Activated naive CD4-positive, alpha-beta T cell treated with anti-CD3 and anti-CD28 coated beads for 36 hours (primary cell): ENCODE measurements at regions of chr15 and their contacts with region 1.

Region 1: DNA sequence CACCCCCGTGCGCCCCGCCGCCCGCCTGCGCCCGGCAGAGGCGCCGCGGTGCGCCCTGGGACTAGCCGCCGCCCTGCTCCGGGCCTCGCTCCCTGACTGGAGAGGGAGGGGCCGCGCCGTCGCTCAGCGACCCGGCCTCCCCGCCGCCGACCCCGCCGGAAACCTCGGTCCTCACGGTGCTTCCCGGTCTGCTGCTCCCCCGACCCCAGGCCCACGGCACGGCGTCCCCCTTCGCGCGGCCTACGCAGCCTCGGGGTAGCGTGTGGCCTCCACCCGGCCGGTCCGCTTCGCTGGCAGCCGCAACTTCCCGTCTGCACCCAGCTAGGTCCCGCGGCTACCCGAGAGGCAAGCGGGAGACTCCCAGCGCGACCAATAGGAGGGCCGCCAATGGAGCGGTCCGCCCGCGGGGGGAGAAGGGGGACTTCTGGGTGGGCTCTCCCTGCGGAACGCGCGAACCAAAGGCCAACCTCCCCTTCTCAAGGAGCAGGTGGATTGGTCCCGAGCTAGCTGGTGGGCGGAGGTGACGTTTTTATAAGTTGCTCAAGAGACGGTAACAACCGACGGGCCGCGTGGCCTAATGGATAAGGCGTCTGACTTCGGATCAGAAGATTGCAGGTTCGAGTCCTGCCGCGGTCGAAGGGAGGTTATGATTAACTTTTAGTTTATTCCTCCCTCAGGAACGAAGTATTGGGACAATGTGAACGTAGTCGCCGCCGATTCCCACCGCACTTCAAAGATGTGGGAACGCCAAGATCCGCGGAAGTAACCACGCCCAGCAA is at the start of gene POLG:
- DNase-seq: peak; percentile 99
- H3K4me3 Mint-ChIP-seq: peak within 1 kb of the TSS; percentile 90
- H3K27ac Mint-ChIP-seq: peak within 1 kb of the TSS; percentile 94
- H3K4me1 Mint-ChIP-seq: peaks cover 52% of the 10 kb centered on the region
- H3K27me3 Mint-ChIP-seq: peaks cover 3% of the 10 kb centered on the region
- total RNA-seq, gene POLG: 93.0 to 96.5 TPM

Region 2: DNA sequence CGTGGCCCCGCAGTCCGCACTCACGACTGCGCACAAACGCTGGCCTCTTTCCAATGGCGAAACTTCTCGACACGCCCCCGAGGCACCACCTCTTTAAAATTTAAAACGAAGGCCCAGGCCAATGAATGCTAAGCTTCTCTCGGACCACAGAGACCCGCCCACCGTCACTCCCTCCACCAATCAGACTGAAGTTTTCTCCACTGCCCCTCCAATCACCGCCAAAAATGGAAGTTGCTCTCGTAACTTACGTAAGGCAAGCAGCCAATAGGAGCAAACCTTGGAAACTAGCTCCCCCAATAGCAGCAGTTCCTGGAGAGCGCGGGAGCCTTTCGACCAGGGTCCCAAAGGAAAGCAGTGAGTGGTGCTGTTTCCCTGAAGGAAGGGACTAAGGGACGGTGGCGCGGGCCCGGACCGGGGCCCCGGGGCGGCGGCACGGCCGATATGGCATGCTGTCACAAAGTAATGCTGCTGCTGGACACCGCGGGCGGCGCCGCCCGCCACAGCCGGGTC is 240.5 kb after region 1 on chr15 and contains the start of gene TICRR:
- CTCF ChIA-PET with region 1: no interaction called
- intact Hi-C with region 1: loop called (anchors 1 kb)
- DNase-seq: peak; percentile 98
- H3K4me3 Mint-ChIP-seq: peak within 1 kb of the TSS; percentile 86
- H3K27ac Mint-ChIP-seq: peak within 1 kb of the TSS; percentile 28
- H3K4me1 Mint-ChIP-seq: peaks cover 18% of the 10 kb centered on the region
- H3K27me3 Mint-ChIP-seq: peaks cover 4% of the 10 kb centered on the region
- total RNA-seq, gene TICRR: 20.7 to 21.0 TPM